ENCODE measurements at regions of chr3 and their contacts with region 1.

Region 1: DNA sequence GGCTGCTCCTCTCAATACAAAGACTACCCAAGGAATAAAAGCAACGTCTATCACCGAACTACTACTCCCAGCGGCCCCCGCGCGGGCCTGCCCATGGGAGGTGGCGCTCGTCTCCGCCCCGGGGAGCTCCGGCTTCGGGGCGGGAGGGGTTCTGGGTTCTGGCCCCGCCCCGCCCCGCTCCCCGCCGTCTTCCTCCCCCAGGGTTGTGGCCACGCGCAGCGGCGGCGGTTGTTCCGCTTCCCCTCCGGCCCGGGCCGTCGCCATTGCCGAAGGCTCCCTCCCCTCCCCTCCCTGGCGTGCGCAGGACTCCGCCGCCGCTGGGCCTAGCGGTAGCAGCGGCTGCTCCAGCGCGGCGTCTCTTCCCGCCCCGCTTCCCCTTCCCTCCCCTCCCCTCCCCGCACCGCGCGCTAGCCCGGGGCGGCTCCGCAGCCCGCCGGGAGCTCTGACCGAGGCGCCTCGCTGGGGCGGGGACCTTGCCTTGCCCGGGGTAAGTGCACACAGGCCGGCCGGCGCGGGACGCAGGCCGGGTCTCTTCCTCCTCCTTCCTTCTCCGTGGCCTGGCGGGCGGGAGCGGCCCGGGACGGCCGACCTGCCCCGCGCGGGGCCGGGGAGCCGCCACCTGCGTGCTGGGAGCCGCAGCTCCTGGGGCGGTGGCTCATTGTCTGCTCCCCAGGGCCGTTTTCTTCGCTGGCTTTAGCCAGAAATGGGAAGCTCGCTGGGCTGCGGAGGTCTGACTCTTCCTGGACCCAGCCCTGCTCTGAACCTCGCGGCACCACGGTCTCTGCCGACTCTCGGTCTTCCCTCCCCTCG is at the start of gene PAK2:
- DNase-seq: peak; percentile 88
- H3K4me3 Mint-ChIP-seq: peak within 1 kb of the TSS; percentile 100
- H3K27ac Mint-ChIP-seq: peak within 1 kb of the TSS; percentile 100
- H3K4me1 Mint-ChIP-seq: peaks cover 27% of the 10 kb centered on the region
- H3K27me3 Mint-ChIP-seq: no peaks in the 10 kb centered on the region
- total RNA-seq, gene PAK2: 82.5 and 86.5 TPM in 2 replicates

Region 2: DNA sequence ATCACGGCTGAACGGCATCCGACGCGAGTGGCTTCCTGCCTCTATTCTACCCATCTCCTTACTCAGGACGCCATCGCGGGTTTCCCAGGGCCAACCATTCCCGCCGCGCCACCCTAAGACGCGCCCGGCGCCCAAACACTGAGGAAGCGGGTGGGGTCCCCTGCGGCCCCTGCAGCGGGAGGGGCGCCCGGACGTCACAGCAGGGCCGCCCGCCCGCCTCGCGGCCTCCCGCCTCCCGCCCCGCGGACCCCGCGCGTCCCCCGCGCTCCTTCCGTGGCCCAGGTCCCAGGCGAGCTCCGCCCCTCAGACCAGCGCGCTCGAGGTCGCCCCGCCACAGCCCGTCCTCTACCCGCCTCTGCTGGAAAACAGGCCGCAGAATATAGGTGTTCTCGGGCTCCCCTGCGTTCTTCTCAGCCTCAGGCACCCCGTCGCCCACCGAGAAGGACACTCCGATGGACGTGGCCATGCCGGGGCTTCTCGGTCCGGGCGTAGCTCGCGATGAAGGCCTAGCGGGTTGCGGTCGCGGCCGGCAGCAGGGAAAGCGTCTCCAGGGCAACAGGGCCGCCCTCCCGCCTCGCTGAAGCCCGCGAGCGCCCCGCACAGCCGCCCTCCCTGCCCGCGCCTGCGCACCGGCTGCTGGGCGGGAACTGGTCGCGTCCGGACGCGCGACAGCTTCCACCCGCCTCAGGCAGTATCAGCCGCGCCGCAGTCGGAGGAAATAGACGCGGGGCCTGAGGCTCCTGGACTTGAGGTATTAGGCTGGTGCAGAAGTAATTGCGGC is 422.0 kb before region 1 on chr3 and contains the start of gene DYNLT2B:
- intact Hi-C with region 1: loop called (anchors 1 kb)
- DNase-seq: peak; percentile 87
- H3K4me3 Mint-ChIP-seq: peak within 1 kb of the TSS; percentile 95
- H3K27ac Mint-ChIP-seq: peak within 1 kb of the TSS; percentile 98
- H3K4me1 Mint-ChIP-seq: peaks cover 7% of the 10 kb centered on the region
- H3K27me3 Mint-ChIP-seq: no peaks in the 10 kb centered on the region
- total RNA-seq, gene DYNLT2B: 11.6 and 12.7 TPM in 2 replicates

Region 3: GRCh38 chr3:196568246-196569002 is 171.5 kb before region 1 on chr3 and contains the starts of genes FBXO45 and WDR53:
- intact Hi-C with region 1: loop called (anchors 1 kb)
- DNase-seq: peak; percentile 94
- H3K4me3 Mint-ChIP-seq: peak within 1 kb of the TSS; percentile 96
- H3K27ac Mint-ChIP-seq: peak within 1 kb of the TSS; percentile 95
- H3K4me1 Mint-ChIP-seq: peaks cover 44% of the 10 kb centered on the region
- H3K27me3 Mint-ChIP-seq: no peaks in the 10 kb centered on the region
- total RNA-seq, gene FBXO45: 22.8 and 24.3 TPM in 2 replicates
- total RNA-seq, gene WDR53: 24.8 and 25.5 TPM in 2 replicates

Region 4: GRCh38 chr3:196639483-196640296 is 100.2 kb before region 1 on chr3 and contains the start of gene NRROS:
- intact Hi-C with region 1: loop called (anchors 1 kb)
- DNase-seq: peak; percentile 61
- H3K4me3 Mint-ChIP-seq: peak within 1 kb of the TSS; percentile 94
- H3K27ac Mint-ChIP-seq: peak within 1 kb of the TSS; percentile 94
- H3K4me1 Mint-ChIP-seq: peaks cover 75% of the 10 kb centered on the region
- H3K27me3 Mint-ChIP-seq: no peaks in the 10 kb centered on the region
- total RNA-seq, gene NRROS: 37.8 and 38.8 TPM in 2 replicates

Region 5: DNA sequence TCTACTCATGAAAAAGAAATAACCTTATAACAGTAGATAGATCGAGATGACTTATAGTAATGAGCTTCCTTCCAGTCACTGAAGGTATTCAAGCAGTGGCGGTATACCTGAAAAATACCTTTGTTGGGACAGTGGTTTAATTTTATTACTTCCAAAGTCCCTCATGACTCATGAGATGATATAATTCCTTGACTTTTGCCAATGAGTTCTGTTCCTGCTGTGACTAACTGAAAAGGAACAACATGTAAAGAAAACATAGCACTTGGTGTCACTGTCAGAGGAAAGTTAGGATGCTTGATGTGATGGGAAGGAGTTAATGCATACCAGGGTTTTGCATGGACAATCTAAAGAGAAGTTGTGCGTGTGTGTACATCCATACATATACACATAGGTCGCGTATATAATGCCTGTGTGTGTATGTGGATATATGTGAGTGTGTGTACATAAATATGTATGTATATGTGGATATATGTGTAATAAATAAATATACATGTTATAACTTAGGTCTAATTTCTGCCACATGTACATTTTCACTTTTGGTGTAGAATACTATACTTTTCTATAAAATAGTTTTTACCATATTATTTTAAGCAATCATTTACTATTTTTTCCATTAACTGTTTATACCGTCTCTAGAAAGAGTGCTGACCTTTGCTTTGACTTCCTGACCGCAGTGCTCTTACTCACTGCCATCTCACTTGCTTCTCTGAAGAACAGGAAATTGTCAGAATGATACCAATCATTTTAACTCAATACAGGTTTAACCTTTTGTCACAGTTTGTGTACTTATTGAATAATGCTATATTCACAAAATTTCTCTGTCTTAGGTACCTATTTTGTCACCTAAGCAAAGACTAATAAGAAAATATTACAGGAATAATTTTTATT is 12.8 kb before region 1 on chr3:
- intact Hi-C with region 1: loop called (anchors 1 kb)
- DNase-seq: no peak
- H3K4me3 Mint-ChIP-seq: no peak overlapping the region
- H3K27ac Mint-ChIP-seq: peak overlapping the region; percentile 68
- H3K4me1 Mint-ChIP-seq: peaks cover 37% of the 10 kb centered on the region
- H3K27me3 Mint-ChIP-seq: no peaks in the 10 kb centered on the region

Region 6: DNA sequence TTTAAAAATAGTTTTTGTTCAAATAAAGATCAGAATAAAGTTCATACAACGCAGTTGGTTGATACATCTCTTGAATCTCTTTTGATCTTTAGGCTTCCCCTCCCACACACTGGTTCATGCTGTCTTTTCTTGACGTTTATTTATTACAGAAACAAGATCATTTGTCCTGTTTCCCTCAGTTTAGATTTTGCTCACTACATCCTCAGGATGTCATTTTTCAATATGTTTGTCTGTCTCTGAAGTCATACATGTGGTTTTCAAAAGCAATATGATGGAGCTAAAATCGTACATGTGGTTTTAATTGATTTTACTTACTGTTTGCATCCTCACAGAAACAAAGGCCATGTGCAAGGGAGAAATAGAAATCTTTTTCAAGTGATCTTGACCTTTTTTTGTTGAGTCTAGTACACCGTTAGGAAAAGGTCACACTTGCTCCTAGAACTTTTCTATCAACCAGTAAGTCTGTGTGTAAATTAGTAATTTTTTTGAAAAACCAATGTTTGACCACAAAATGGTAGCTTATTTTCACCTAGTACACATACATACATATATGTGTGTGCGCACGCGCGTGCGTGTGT is 64.1 kb after region 1 on chr3:
- intact Hi-C with region 1: loop called (anchors 5 kb)
- DNase-seq: no peak
- H3K4me3 Mint-ChIP-seq: no peak overlapping the region
- H3K27ac Mint-ChIP-seq: peak overlapping the region; percentile 62
- H3K4me1 Mint-ChIP-seq: peaks cover 15% of the 10 kb centered on the region
- H3K27me3 Mint-ChIP-seq: no peaks in the 10 kb centered on the region

Region 7: DNA sequence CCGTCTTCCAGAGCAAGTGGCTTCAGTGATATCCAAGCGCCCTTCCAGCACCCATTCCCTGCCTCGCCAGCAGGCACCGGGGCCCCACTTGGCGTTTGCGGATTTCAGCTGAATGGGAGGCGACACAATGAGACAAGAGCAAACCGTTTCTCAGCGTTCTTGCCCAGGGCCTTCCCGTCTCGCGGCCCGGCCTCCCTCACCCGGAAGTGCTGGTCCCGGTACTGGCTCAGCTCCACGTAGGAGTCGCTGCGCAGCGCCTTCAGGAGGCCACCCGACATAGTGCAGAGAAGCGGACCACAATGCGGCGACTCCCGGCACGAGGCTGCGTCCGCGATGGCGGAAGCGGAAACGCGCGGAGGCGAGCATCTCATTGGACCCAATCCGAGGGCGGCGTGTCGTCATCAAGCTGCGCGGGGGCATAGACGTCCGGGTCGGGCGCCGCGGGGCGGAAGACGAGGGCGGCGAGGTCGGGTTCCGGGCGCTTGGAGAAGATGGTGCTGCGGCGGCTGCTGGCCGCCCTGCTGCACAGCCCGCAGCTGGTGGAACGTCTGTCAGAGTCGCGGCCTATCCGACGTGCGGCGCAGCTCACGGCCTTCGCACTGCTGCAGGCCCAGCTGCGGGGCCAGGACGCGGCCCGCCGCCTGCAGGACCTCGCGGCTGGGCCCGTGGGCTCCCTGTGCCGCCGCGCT is 202.5 kb after region 1 on chr3 and contains the start of gene NCBP2:
- intact Hi-C with region 1: loop called (anchors 1 kb)
- DNase-seq: peak; percentile 100
- H3K4me3 Mint-ChIP-seq: peak within 1 kb of the TSS; percentile 100
- H3K27ac Mint-ChIP-seq: peak within 1 kb of the TSS; percentile 97
- H3K4me1 Mint-ChIP-seq: peaks cover 55% of the 10 kb centered on the region
- H3K27me3 Mint-ChIP-seq: peaks cover 2% of the 10 kb centered on the region
- total RNA-seq, gene NCBP2: 102 and 111 TPM in 2 replicates

Measured in activated T-helper 1 cell treated with anti-CD3 and anti-CD28 coated beads, Interleukin-12 subunit alpha, Interleukin-12 subunit beta, Interleukin-2, Interleukin-4 antibody, amounts not matched to agents 30 ng/mL and 10 ng/mL and 1 ng/mL, durations not matched to agents 14 hours and 24 hours and 36 hours (primary cell).